Common myeloid progenitor, CD34-positive (primary cell): ENCODE measurements at regions of chr10 and their contacts with region 1.

Region 1: DNA sequence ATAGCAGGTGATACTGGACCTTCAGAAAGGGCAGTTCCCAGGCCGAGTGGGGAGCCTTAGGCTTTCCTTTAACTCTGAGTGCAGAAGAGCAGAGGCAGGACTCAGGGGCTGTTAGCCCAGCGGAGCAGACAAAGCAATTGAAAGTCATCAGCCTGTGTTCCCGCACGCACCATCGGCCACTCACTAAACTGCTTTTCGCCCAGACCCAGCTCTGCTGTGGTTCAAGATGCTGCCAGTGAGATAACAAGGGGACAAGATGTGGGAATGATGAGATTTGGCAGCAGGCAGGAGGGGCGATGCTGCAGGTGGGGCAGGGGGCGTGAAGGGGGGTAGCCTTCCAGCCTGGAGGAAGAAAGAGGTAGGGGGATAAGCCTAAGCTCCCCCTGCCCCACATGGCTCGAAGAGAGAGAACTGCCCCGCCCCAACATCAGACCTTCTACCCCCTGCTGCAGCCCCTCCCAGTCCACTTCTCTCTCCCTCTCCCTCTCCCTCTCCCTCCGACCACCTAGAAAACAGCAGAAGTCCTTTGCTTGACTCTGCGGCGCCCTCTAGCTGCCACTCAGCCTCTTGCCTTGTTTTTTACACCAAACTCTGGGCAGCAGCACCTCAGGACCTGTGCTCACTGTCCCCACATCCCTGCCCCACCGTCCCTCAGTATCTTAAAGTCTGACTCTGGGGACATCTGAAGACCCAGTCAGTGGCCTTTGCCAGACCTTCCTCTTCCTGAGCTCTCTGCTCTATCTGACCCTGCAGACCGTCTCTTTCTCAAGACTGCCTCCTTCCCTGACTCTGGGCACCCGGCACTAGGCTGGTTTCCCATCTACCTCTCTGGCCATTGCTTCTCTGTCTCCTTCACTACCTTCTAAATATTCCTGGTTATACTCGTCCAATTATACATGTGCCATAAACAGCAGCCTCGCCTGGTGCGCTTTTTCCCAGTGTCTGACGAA is 110.5 kb downstream of the C10orf105 start:
- DNase-seq: peak; percentile 74 to 86 (median 82)
- H3K4me3 ChIP-seq: no peak overlapping the region
- H3K27ac ChIP-seq: no peak overlapping the region
- H3K4me1 ChIP-seq: peaks cover 0 to 9% (median 6%) of the 10 kb centered on the region in 4 experiments
- H3K27me3 ChIP-seq: no peaks in the 10 kb centered on the region

Region 2: DNA sequence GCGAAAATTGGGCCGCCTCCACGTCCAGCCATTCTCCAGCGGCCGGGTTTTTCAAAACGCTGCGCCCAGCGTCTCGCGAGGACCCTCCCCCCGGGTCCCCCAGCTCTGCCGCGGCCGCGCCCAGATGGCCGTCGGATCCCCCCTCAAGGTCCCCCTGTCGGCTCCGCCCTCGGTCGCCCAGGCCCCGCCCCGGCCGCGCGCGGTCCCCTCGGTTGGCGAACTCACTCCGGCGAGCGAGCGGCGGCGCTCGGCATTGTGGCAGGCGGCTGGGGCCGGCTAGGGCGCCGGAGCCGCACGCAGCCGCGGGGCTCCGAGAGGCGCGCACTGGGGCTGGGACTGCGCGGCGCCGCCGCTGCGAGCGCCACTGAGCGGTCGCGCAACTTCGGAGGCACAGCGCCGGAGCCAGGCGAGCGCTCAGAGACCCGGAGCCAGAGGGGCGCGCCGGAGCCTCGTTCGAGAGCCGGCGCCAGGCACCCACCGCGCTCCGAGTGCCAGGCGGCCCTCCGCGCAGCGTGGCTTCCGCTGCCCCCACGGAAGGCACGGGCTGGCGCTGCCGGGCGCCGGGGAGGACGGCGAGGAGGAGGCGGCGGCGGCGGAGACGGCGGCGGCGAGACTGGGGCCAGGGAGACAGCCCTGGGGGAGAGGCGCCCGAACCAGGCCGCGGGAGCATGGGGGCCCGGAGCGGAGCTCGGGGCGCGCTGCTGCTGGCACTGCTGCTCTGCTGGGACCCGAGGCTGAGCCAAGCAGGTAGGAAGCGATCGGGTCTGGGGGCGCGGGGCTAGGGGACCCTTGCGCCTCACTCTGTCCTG is 396.6 kb before region 1 on chr10 and contains the start of gene UNC5B:
- CTCF ChIA-PET with region 1: no interaction called
- POLR2A ChIA-PET with region 1: no interaction called
- DNase-seq: peak; percentile 77 to 90 (median 89)
- H3K4me3 ChIP-seq: peak within 1 kb of the TSS; percentile 36 to 75 (median 65)
- H3K27ac ChIP-seq: no peak within 1 kb of the TSS
- H3K4me1 ChIP-seq: peaks cover 0 to 38% (median 30%) of the 10 kb centered on the region in 4 experiments
- H3K27me3 ChIP-seq: peaks cover 0 to 56% (median 34%) of the 10 kb centered on the region in 5 experiments

Region 3: DNA sequence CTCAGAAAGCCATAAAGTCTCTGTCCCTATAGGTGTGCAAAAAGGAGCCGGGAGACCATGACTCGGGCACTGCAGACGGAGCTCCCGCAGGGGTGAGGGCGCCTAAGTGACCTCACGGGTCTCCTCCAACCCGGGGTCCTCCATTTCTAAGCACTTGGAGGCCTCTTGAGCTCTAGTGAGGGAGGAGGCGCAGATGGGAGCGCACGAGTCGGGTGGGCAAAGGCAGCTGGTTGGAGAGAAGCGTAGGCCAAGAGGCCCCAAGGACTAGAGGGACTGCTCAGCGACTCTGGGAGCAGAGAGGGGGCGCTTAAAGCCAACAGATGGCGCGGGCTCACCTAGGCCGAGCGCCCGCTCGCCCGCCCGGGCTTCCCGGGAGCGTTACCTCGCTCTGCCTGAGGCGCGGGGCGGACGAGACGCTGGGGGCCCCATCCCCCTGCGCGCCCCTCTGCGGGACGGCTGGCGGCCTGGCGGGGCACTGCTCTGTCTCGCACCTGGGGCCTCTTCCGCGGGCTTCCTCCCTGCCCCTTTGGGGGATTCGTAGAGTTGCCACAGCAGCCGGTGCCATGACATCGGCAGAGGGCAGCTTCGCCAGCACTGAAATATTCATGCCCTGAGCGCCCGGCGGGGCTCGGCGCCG is 212.9 kb before region 1 on chr10:
- CTCF ChIA-PET with region 1: interaction called, 42 read pairs
- POLR2A ChIA-PET with region 1: no interaction called
- DNase-seq: peak; percentile 63 to 73 (median 65)
- H3K4me3 ChIP-seq: peak overlapping the region; percentile 28 to 76 (median 56)
- H3K27ac ChIP-seq: no peak overlapping the region
- H3K4me1 ChIP-seq: peaks cover 0 to 18% (median 18%) of the 10 kb centered on the region in 4 experiments
- H3K27me3 ChIP-seq: peaks cover 0 to 36% (median 33%) of the 10 kb centered on the region in 5 experiments

Region 4: GRCh38 chr10:71483885-71484751 is 125.0 kb before region 1 on chr10:
- CTCF ChIA-PET with region 1: no interaction called
- POLR2A ChIA-PET with region 1: no interaction called
- DNase-seq: no peak
- H3K4me3 ChIP-seq: no peak overlapping the region
- H3K27ac ChIP-seq: no peak overlapping the region
- H3K4me1 ChIP-seq: no peaks in the 10 kb centered on the region
- H3K27me3 ChIP-seq: no peaks in the 10 kb centered on the region

Region 5: DNA sequence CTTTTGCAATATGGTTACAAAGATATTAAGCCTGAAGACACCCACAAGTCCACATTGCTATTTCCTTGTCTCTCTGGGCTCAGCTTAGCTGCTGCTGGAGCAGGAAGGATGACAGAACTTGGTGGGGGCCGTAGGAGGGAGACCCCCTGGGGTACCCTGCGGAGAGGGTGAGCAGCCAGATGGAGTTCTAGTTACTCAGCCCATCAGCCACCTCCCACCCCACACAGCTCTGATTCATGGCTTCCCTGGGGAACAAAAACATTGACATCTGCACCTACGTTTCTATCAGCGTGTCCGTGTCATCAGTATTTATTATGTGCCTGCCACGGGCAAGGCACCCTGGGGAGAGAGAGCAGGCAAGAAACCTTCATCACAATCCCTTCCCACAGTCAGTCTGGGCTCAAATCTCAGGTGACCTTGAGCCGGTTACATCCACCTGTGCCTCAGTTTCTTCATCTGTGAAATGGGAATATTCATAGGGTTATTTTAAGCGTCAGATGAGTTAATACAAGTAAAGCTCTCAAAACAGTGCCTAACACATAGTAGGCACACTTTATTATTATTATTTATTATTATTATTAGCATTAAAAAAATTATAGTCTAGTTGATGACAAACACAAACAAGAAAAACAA is 21.0 kb before region 1 on chr10:
- CTCF ChIA-PET with region 1: interaction called, 13 read pairs
- POLR2A ChIA-PET with region 1: no interaction called
- DNase-seq: no peak
- H3K4me3 ChIP-seq: no peak overlapping the region
- H3K27ac ChIP-seq: no peak overlapping the region
- H3K4me1 ChIP-seq: peaks cover 0 to 5% (median 0%) of the 10 kb centered on the region in 4 experiments
- H3K27me3 ChIP-seq: no peaks in the 10 kb centered on the region

Region 6: GRCh38 chr10:71597821-71598498 is 11.1 kb before region 1 on chr10:
- CTCF ChIA-PET with region 1: interaction called, 17 read pairs
- POLR2A ChIA-PET with region 1: no interaction called
- DNase-seq: peak; percentile 82 to 94 (median 92)
- H3K4me3 ChIP-seq: peak overlapping the region in 1 of 7 experiments; percentile 19
- H3K27ac ChIP-seq: peak overlapping the region in 1 of 2 experiments; percentile 19
- H3K4me1 ChIP-seq: peaks cover 0 to 17% (median 14%) of the 10 kb centered on the region in 4 experiments
- H3K27me3 ChIP-seq: no peaks in the 10 kb centered on the region

Region 7: DNA sequence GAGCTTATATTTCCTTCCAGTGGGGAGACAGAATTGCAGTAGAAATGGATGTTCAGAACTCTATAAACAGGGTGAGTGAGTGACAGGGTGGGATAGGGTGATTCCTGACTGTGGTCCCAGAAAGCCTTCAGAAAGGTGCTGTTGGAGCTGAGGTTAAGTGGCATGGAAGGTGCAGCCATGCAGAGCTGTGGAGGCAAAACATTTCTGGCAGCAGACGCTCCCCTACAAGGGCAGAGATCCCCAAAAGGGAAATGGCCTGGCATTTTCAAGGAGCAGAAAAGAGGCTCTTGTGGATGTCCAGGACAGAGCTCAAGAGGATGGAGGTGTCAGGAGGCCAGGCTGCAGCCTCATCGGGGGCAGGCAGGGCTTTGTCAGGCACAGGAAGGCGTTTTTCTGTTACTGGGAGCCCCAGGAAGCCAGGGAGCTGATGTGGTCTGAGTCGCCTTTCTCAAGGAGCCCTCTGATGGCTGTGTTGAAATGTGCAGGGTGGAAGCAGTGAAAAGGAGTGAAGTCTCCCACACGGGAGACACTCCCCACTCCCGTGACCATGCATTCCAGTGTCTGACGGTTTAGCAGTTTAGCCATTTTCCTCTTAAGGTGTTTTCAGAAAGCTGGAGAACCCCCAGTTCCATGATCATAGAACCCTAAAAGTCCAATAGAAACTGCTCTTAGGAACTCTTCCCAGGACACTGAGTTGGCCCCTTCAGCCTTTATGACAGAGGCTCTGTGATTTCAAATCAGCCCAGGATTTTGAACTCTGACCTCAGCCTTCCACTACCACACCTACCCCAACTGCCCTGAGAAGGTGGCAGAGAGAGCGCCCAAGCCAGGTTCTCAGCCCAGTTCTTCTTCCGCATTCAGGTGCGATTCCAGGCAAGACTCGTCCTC is 14.2 kb after region 1 on chr10:
- CTCF ChIA-PET with region 1: interaction called, 11 read pairs
- POLR2A ChIA-PET with region 1: interaction called, 3 read pairs
- DNase-seq: peak; percentile 26 to 49 (median 42)
- H3K4me3 ChIP-seq: no peak overlapping the region
- H3K27ac ChIP-seq: no peak overlapping the region
- H3K4me1 ChIP-seq: peaks cover 0 to 11% (median 7%) of the 10 kb centered on the region in 4 experiments
- H3K27me3 ChIP-seq: no peaks in the 10 kb centered on the region

Region 8: GRCh38 chr10:71835671-71836595 is 226.8 kb after region 1 on chr10:
- CTCF ChIA-PET with region 1: no interaction called
- POLR2A ChIA-PET with region 1: no interaction called
- DNase-seq: peak in 2 of 3 donors; percentile 46 to 70
- H3K4me3 ChIP-seq: no peak overlapping the region
- H3K27ac ChIP-seq: no peak overlapping the region
- H3K4me1 ChIP-seq: peaks cover 0 to 10% (median 4%) of the 10 kb centered on the region in 4 experiments
- H3K27me3 ChIP-seq: no peaks in the 10 kb centered on the region